IMR-90 (cell line): ENCODE measurements at regions of chr10 and their contacts with region 1.

Region 1: DNA sequence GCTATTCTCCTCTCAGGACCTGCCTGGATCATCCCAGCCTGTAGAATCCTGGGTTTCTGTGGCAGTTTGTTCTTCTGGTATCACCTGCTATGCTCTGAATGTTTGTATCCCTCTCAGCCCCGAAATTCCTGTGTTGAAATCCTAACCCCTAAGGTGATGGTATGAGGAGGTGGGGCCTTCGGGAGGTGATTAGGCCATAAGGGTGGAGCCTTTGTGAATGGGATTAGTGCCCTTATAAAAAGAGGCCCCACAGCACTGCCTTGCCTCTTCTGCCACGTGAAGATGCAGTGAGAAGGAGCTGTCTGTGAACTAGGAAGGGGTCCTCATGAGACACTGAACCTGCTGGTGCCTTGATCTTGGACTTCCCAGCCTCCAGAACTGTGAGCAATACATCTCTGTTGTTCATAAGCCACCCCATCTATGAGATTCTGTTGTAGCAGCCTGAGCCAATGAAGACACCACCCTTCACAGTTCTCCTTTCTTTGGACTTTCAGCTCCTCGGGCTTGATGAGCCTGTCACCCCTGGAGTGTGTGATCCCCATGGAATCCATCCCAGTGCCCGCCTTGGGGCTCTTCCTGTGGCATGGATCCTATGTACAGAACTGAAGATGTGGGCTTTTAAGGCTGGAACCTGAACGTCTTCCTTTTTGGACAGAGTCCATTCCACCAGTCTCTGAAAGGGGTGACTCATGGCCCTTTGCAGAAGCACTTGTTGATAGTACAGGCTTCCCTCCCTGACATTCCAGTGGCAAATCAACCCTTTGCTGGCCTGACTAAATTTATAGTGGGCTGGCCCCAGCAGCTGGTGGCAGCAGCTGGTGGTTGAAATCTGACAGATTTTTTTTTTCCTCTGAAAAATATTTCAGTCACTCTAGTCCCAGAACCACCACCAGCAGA is 138.0 kb downstream of the TACC2 start:
- DNase-seq: peak; percentile 97
- ATAC-seq: peak; percentile 93
- H3K4me3 ChIP-seq: no peak overlapping the region
- H3K27ac ChIP-seq: peak overlapping the region; percentile 5
- H3K4me1 ChIP-seq: peaks cover 12% of the 10 kb centered on the region
- H3K27me3 ChIP-seq: no peaks in the 10 kb centered on the region
- CTCF ChIP-seq: no peak
- POLR2A ChIP-seq: no peak
- RAD21 ChIP-seq: no peak

Region 2: GRCh38 chr10:122089311-122090017 is 37.5 kb before region 1 on chr10:
- CTCF ChIA-PET with region 1: no interaction called
- POLR2A ChIA-PET with region 1: no interaction called
- dilution Hi-C with region 1: no loop called
- in situ Hi-C with region 1: no loop called
- intact Hi-C with region 1: no loop called
- DNase-seq: no peak
- ATAC-seq: no peak
- H3K4me3 ChIP-seq: no peak overlapping the region
- H3K27ac ChIP-seq: no peak overlapping the region
- H3K4me1 ChIP-seq: no peaks in the 10 kb centered on the region
- H3K27me3 ChIP-seq: peaks cover 51% of the 10 kb centered on the region
- CTCF ChIP-seq: no peak
- POLR2A ChIP-seq: no peak
- RAD21 ChIP-seq: no peak

Region 3: DNA sequence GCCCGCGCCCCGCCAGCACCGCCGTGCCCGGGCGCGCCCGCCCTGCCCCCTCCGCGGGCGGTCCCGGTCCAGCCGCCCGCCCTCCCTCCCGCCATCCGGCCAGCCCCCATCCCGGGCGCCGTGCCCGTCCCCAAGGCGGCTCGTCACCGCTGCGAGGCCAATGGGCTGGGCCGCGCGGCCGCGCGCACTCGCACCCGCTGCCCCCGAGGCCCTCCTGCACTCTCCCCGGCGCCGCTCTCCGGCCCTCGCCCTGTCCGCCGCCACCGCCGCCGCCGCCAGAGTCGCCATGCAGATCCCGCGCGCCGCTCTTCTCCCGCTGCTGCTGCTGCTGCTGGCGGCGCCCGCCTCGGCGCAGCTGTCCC is 334.3 kb after region 1 on chr10 and contains the start of gene HTRA1:
- CTCF ChIA-PET with region 1: no interaction called
- POLR2A ChIA-PET with region 1: no interaction called
- dilution Hi-C with region 1: no loop called
- in situ Hi-C with region 1: loop called (anchors 10 kb)
- intact Hi-C with region 1: no loop called
- DNase-seq: peak; percentile 61
- ATAC-seq: peak; percentile 82
- H3K4me3 ChIP-seq: peak within 1 kb of the TSS; percentile 52
- H3K27ac ChIP-seq: peak within 1 kb of the TSS; percentile 34
- H3K4me1 ChIP-seq: peaks cover 12% of the 10 kb centered on the region
- H3K27me3 ChIP-seq: peaks cover 2% of the 10 kb centered on the region
- CTCF ChIP-seq: no peak
- POLR2A ChIP-seq: no peak
- RAD21 ChIP-seq: no peak
- total RNA-seq, gene HTRA1: 23.1 and 28.5 TPM in 2 replicates